ENCODE measurements at regions of chr9 and their contacts with region 1.

Region 1: DNA sequence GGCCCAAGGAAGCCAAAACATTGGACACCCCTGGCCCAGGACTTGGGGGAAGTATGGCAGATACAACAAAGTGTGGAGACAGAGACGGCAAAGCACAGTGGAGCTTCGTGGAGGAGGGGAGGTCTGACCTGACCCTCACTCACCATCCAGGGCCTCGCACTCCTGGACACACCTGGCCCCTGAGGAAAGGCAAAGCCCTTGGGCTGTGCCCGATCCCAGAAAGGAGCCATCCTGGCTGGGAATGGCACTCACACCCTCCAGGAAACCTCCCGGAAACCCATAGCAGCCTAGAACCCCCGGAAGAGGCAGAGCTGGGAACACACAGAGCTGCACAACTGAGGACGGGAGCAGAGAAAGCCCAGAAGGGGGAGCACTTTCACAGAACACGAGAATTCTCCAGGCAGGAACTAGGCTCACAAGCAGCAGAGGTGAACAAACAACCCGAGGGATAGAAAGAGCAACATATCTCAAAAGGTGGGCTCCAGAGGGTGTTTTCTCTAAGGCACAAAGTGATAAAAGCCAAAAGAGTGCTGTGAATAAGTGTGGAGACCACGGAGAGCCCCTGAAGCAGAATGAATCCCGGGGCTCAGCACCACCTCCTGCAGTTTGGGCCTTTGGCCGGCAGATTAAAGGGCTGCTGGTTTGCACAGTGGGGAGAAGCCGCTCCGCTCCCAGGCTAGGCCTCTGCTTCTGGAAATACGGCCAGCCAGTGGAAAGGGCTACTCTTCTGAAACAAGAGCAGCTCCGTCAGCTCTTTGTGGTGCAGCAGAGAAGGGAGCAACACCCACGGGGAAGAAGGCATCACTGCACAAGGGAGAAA is 108.2 kb downstream of the UBE2R2 start:
- DNase-seq: peak in 1 of 2 donors; percentile 36
- ATAC-seq: peak; percentile 66

Region 2: GRCh38 chr9:34072868-34073590 is 147.8 kb after region 1 on chr9:
- intact Hi-C with region 1: loop called in 1 of 2 experiments (anchors 10 kb)
- DNase-seq: peak; percentile 24 to 44
- ATAC-seq: peak; percentile 95